SK-N-SH (cell line): ENCODE measurements at regions of chr6 and their contacts with region 1.

Region 1: GRCh38 chr6:44387346-44388133 is at the start of gene CDC5L:
- DNase-seq: peak; percentile 93
- H3K4me3 ChIP-seq: peak within 1 kb of the TSS; percentile 91
- H3K27ac ChIP-seq: peak within 1 kb of the TSS; percentile 93 to 98
- H3K4me1 ChIP-seq: peaks cover 4 to 22% of the 10 kb centered on the region in 2 experiments; a peak in 3 of 4 replicates
- H3K27me3 ChIP-seq: no peaks in the 10 kb centered on the region
- CTCF ChIP-seq: no peak
- EP300 ChIP-seq: peak in 1 of 2 experiments; percentile 7; a peak in 1 of 4 replicates
- RAD21 ChIP-seq: no peak
- polyA plus RNA-seq, gene CDC5L: 6.0 and 7.3 TPM in 2 replicates

Region 2: GRCh38 chr6:44397424-44398164 is 10.1 kb after region 1 on chr6:
- CTCF ChIA-PET with region 1: interaction called, 11 read pairs
- POLR2A ChIA-PET with region 1: interaction called, 4 read pairs
- DNase-seq: peak; percentile 64
- H3K4me3 ChIP-seq: no peak overlapping the region
- H3K27ac ChIP-seq: peak overlapping the region in 1 of 2 experiments; percentile 80; a peak in 3 of 4 replicates
- H3K4me1 ChIP-seq: peaks cover 0 to 10% of the 10 kb centered on the region in 2 experiments; a peak in 3 of 4 replicates
- H3K27me3 ChIP-seq: no peaks in the 10 kb centered on the region
- CTCF ChIP-seq: peak; percentile 16; the same call in 1 of the 2 replicates
- EP300 ChIP-seq: peak in 1 of 2 experiments; percentile 67; a peak in 2 of 4 replicates
- RAD21 ChIP-seq: peak; percentile 8; the same call in 1 of the 2 replicates